ENCODE measurements at regions of chr7 and their contacts with region 1.

Region 1: GRCh38 chr7:110595690-110596325 is 495.1 kb upstream of the LRRN3 start:
- DNase-seq: peak in 5 of 9 donors; percentile 16 to 39 (median 21)
- ATAC-seq: no peak
- H3K4me3 ChIP-seq: no peak overlapping the region
- H3K4me3 Mint-ChIP-seq: no peak overlapping the region
- H3K27ac ChIP-seq: no peak overlapping the region
- H3K27ac Mint-ChIP-seq: no peak overlapping the region
- H3K4me1 ChIP-seq: no peaks in the 10 kb centered on the region
- H3K4me1 Mint-ChIP-seq: peaks cover 0 to 15% (median 0%) of the 10 kb centered on the region in 7 donors
- H3K27me3 ChIP-seq: no peaks in the 10 kb centered on the region
- H3K27me3 Mint-ChIP-seq: peaks cover 0 to 11% (median 0%) of the 10 kb centered on the region in 5 donors

Region 2: DNA sequence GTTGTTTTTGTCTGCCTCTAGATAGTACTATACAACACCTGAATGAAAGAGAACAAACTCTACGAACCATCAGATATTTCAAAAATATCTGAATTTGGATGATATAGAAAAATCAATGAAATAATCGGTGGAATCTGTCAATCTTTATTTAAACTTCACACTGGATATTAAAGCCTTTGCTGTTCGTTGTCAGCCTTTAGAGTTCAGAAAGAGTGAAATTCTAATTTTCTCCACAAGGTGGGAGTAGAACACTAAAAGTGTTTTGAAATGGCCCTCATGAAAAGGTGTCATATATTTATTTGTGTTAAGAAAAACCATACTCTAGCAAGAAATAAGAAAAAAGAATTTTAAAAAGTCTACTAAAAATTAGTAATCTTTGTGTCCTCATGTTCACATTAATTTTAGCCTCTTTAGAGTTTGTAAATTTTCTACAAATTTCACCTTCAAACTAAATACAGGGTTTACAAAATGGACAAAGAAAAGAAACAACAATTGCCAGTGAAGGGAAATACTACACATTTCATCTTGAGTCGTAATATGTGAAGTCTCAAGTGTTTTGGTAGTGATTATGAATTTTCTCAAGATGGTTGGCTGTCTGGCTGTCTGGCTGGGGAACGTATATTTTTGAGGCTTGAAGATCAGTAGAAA is 1982.6 kb before region 1 on chr7:
- CTCF ChIA-PET with region 1: no interaction called
- POLR2A ChIA-PET with region 1: no interaction called
- intact Hi-C with region 1: loop called in 1 of 2 experiments (anchors 5 kb)
- DNase-seq: peak in 6 of 9 donors; percentile 4 to 51 (median 42)
- ATAC-seq: peak; percentile 56
- H3K4me3 ChIP-seq: no peak overlapping the region
- H3K4me3 Mint-ChIP-seq: no peak overlapping the region
- H3K27ac ChIP-seq: no peak overlapping the region
- H3K27ac Mint-ChIP-seq: peak overlapping the region in 1 of 9 donors; percentile 25
- H3K4me1 ChIP-seq: no peaks in the 10 kb centered on the region
- H3K4me1 Mint-ChIP-seq: no peaks in the 10 kb centered on the region
- H3K27me3 ChIP-seq: no peaks in the 10 kb centered on the region
- H3K27me3 Mint-ChIP-seq: peaks cover 0 to 17% (median 0%) of the 10 kb centered on the region in 5 donors

Region 3: GRCh38 chr7:110090110-110090769 is 505.6 kb before region 1 on chr7:
- CTCF ChIA-PET with region 1: no interaction called
- POLR2A ChIA-PET with region 1: no interaction called
- intact Hi-C with region 1: loop called in 1 of 2 experiments (anchors 10 kb)
- DNase-seq: peak in 6 of 9 donors; percentile 11 to 28 (median 15)
- ATAC-seq: no peak
- H3K4me3 ChIP-seq: no peak overlapping the region
- H3K4me3 Mint-ChIP-seq: no peak overlapping the region
- H3K27ac ChIP-seq: no peak overlapping the region
- H3K27ac Mint-ChIP-seq: no peak overlapping the region
- H3K4me1 ChIP-seq: no peaks in the 10 kb centered on the region
- H3K4me1 Mint-ChIP-seq: no peaks in the 10 kb centered on the region
- H3K27me3 ChIP-seq: no peaks in the 10 kb centered on the region
- H3K27me3 Mint-ChIP-seq: peaks cover 0 to 10% (median 3%) of the 10 kb centered on the region in 5 donors